Activated CD4-positive, alpha-beta T cell treated with anti-CD3 and anti-CD28 coated beads for 36 hours (primary cell): ENCODE measurements at regions of chr9 and their contacts with region 1.

Region 1: GRCh38 chr9:113963017-113963620 is 87.0 kb downstream of the ZNF618 start:
- DNase-seq: peak; percentile 69
- ATAC-seq: peak; percentile 55
- H3K4me3 Mint-ChIP-seq: no peak overlapping the region
- H3K27ac Mint-ChIP-seq: no peak overlapping the region
- H3K4me1 Mint-ChIP-seq: no peaks in the 10 kb centered on the region
- H3K27me3 Mint-ChIP-seq: no peaks in the 10 kb centered on the region

Region 2: GRCh38 chr9:113568571-113569321 is 394.4 kb before region 1 on chr9:
- CTCF ChIA-PET with region 1: no interaction called
- POLR2A ChIA-PET with region 1: no interaction called
- intact Hi-C with region 1: no loop called
- DNase-seq: no peak
- ATAC-seq: no peak
- H3K4me3 Mint-ChIP-seq: no peak overlapping the region
- H3K27ac Mint-ChIP-seq: no peak overlapping the region
- H3K4me1 Mint-ChIP-seq: peaks cover 11% of the 10 kb centered on the region
- H3K27me3 Mint-ChIP-seq: no peaks in the 10 kb centered on the region

Region 3: GRCh38 chr9:113602126-113603044 is 360.7 kb before region 1 on chr9:
- CTCF ChIA-PET with region 1: no interaction called
- POLR2A ChIA-PET with region 1: no interaction called
- intact Hi-C with region 1: no loop called
- DNase-seq: peak; percentile 92
- ATAC-seq: peak; percentile 100
- H3K4me3 Mint-ChIP-seq: no peak overlapping the region
- H3K27ac Mint-ChIP-seq: peak overlapping the region; percentile 78
- H3K4me1 Mint-ChIP-seq: peaks cover 15% of the 10 kb centered on the region
- H3K27me3 Mint-ChIP-seq: no peaks in the 10 kb centered on the region

Region 4: DNA sequence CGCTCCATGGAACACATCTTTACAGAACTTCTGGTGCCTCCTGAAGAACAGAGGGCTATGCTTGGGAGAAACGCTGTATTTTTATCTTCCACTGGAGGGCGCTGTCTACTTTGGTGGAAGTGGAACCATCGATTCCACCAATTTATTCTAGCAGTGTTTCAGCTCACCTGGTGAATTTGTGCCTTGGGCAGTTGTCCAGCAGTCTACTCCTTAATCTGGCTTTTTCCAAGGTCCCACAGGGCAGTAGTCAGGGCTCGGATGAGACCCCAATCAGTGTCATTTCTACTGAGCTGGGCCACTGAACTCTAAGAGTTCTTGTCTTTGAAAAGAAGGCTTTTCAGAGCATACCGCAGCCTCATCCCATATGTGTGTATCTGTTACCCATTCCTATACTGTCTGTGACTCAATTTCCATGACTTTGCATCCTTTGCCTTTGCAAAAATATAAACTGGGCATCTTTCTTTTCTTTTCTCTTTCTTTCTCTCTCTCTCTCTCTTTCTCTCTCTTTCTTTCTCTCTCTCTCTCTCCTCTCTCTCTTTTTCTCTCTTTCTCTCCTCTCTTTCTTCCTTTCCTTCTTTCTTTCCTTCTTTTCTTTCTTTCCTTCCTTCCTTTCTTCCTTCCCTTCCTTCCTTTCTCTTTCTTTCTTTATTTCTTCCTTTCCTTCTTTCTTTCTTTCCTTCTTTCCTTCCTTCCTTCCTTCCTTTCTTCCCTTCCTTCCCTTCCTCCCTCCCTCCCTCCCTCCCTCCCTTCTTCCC is 225.4 kb before region 1 on chr9:
- CTCF ChIA-PET with region 1: no interaction called
- POLR2A ChIA-PET with region 1: no interaction called
- intact Hi-C with region 1: loop called in 1 of 2 experiments (anchors 1 kb)
- DNase-seq: peak; percentile 54
- ATAC-seq: no peak
- H3K4me3 Mint-ChIP-seq: no peak overlapping the region
- H3K27ac Mint-ChIP-seq: no peak overlapping the region
- H3K4me1 Mint-ChIP-seq: no peaks in the 10 kb centered on the region
- H3K27me3 Mint-ChIP-seq: peaks cover 7% of the 10 kb centered on the region

Region 5: DNA sequence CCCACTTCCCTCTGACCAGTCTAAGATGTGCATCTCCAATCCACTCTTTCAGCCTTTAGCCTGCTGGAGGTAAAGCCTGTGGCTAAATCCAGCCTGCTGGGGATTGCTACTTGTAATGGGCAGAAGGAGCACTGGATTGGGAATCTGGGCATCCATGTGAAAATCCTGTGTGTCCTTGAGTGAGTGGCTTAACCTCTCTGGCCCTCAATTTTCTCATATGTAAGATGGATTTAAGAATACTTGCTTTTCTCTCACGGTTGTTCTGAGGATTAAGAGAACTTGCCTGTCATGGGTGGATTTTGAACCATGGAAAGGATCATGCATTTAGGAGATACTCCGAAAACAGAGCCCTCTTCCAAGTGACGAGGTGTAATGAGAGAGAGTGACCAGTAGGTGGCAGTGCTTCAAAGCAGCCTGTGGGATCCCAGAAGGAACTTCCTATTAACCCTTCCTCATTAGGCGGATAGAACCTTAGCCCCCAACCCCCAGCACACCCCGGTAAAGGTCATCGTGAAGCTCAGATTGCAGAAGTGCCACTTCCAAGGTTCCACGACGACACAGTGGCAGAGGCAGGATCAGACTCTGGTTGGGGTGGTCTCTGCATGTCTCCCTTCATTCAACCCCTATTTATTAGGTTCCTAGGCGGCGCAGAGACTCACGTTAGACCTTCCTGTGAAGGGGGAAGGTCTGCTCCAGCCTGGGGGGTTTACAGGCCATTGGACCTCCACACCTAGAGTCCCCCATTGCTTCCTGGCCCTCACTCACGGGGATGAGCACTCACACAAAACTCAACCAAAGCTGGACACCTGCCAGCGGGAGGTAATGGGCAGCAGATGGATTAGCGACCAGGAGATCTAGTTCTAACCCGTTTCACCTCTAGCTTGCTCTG is 155.7 kb before region 1 on chr9:
- CTCF ChIA-PET with region 1: interaction called, 4 read pairs
- POLR2A ChIA-PET with region 1: no interaction called
- intact Hi-C with region 1: loop called (anchors 1 to 2 kb)
- DNase-seq: peak; percentile 58
- ATAC-seq: no peak
- H3K4me3 Mint-ChIP-seq: no peak overlapping the region
- H3K27ac Mint-ChIP-seq: no peak overlapping the region
- H3K4me1 Mint-ChIP-seq: peaks cover 2% of the 10 kb centered on the region
- H3K27me3 Mint-ChIP-seq: peaks cover 12% of the 10 kb centered on the region

Region 6: GRCh38 chr9:114059047-114059803 is 96.1 kb after region 1 on chr9:
- CTCF ChIA-PET with region 1: no interaction called
- POLR2A ChIA-PET with region 1: no interaction called
- intact Hi-C with region 1: no loop called
- DNase-seq: no peak
- ATAC-seq: no peak
- H3K4me3 Mint-ChIP-seq: no peak overlapping the region
- H3K27ac Mint-ChIP-seq: no peak overlapping the region
- H3K4me1 Mint-ChIP-seq: no peaks in the 10 kb centered on the region
- H3K27me3 Mint-ChIP-seq: peaks cover 11% of the 10 kb centered on the region